ENCODE measurements at regions of chr6 and their contacts with region 1.

Region 1: GRCh38 chr6:148760568-148761526 is 14.0 kb downstream of the UST start:
- DNase-seq: peak in 1 of 2 donors; percentile 30
- H3K4me3 ChIP-seq: peak overlapping the region in 2 of 3 donors; percentile 35 to 51
- H3K27ac ChIP-seq: peak overlapping the region; percentile 78 to 83
- H3K4me1 ChIP-seq: no peaks in the 10 kb centered on the region
- H3K27me3 ChIP-seq: no peaks in the 10 kb centered on the region
- CTCF ChIP-seq: no peak
- POLR2A ChIP-seq: no peak

Region 2: GRCh38 chr6:148440877-148441453 is 319.9 kb before region 1 on chr6:
- intact Hi-C with region 1: no loop called
- DNase-seq: peak; percentile 73 to 87
- H3K4me3 ChIP-seq: no peak overlapping the region
- H3K27ac ChIP-seq: peak overlapping the region; percentile 84 to 87
- H3K4me1 ChIP-seq: no peaks in the 10 kb centered on the region
- H3K27me3 ChIP-seq: no peaks in the 10 kb centered on the region
- CTCF ChIP-seq: no peak
- POLR2A ChIP-seq: no peak

Region 3: GRCh38 chr6:149060300-149060997 is 299.6 kb after region 1 on chr6:
- intact Hi-C with region 1: loop called (anchors 10 kb)
- DNase-seq: no peak
- H3K4me3 ChIP-seq: peak overlapping the region in 1 of 3 donors; percentile 8
- H3K27ac ChIP-seq: no peak overlapping the region
- H3K4me1 ChIP-seq: no peaks in the 10 kb centered on the region
- H3K27me3 ChIP-seq: no peaks in the 10 kb centered on the region
- CTCF ChIP-seq: no peak
- POLR2A ChIP-seq: no peak

Region 4: GRCh38 chr6:150514599-150515401 is 1754.0 kb after region 1 on chr6:
- intact Hi-C with region 1: no loop called
- DNase-seq: no peak
- H3K4me3 ChIP-seq: no peak overlapping the region
- H3K27ac ChIP-seq: no peak overlapping the region
- H3K4me1 ChIP-seq: no peaks in the 10 kb centered on the region
- H3K27me3 ChIP-seq: no peaks in the 10 kb centered on the region
- CTCF ChIP-seq: no peak
- POLR2A ChIP-seq: no peak

Measured in breast epithelium (tissue), 4 donors.